T-cell (primary cell): ENCODE measurements at regions of chr1 and their contacts with region 1.

Region 1: GRCh38 chr1:224052772-224053171 is 61.1 kb upstream of the FBXO28 start:
- DNase-seq: no peak
- ATAC-seq: no peak
- H3K4me3 ChIP-seq: no peak overlapping the region
- H3K4me3 Mint-ChIP-seq: no peak overlapping the region
- H3K27ac ChIP-seq: no peak overlapping the region
- H3K27ac Mint-ChIP-seq: no peak overlapping the region
- H3K4me1 ChIP-seq: peaks cover 0 to 2% of the 10 kb centered on the region in 2 experiments
- H3K4me1 Mint-ChIP-seq: peaks cover 0 to 3% (median 2%) of the 10 kb centered on the region in 3 donors
- H3K27me3 ChIP-seq: peaks cover 0 to 10% of the 10 kb centered on the region in 2 experiments
- H3K27me3 Mint-ChIP-seq: peaks cover 6 to 11% of the 10 kb centered on the region in 2 donors

Region 2: GRCh38 chr1:223811634-223812415 is 240.9 kb before region 1 on chr1:
- CTCF ChIA-PET with region 1: interaction called, 3 to 10 read pairs
- POLR2A ChIA-PET with region 1: no interaction called
- DNase-seq: peak in 1 of 35 experiments; percentile 62
- ATAC-seq: peak in 3 of 4 experiments; percentile 51 to 62 (median 57)
- H3K4me3 ChIP-seq: no peak overlapping the region
- H3K4me3 Mint-ChIP-seq: no peak overlapping the region
- H3K27ac ChIP-seq: no peak overlapping the region
- H3K27ac Mint-ChIP-seq: peak overlapping the region; percentile 2 to 44
- H3K4me1 ChIP-seq: peaks cover 11 to 14% of the 10 kb centered on the region in 2 experiments
- H3K4me1 Mint-ChIP-seq: peaks cover 34 to 41% (median 39%) of the 10 kb centered on the region in 3 donors
- H3K27me3 ChIP-seq: no peaks in the 10 kb centered on the region
- H3K27me3 Mint-ChIP-seq: no peaks in the 10 kb centered on the region

Region 3: GRCh38 chr1:224308064-224308463 is 255.3 kb after region 1 on chr1:
- CTCF ChIA-PET with region 1: no interaction called
- POLR2A ChIA-PET with region 1: interaction called in 1 of 2 experiments, 11 read pairs
- DNase-seq: no peak
- ATAC-seq: no peak
- H3K4me3 ChIP-seq: no peak overlapping the region
- H3K4me3 Mint-ChIP-seq: no peak overlapping the region
- H3K27ac ChIP-seq: no peak overlapping the region
- H3K27ac Mint-ChIP-seq: no peak overlapping the region
- H3K4me1 ChIP-seq: no peaks in the 10 kb centered on the region
- H3K4me1 Mint-ChIP-seq: no peaks in the 10 kb centered on the region
- H3K27me3 ChIP-seq: no peaks in the 10 kb centered on the region
- H3K27me3 Mint-ChIP-seq: no peaks in the 10 kb centered on the region